H1 (cell line): ENCODE measurements at regions of chr12 and their contacts with region 1.

Region 1: DNA sequence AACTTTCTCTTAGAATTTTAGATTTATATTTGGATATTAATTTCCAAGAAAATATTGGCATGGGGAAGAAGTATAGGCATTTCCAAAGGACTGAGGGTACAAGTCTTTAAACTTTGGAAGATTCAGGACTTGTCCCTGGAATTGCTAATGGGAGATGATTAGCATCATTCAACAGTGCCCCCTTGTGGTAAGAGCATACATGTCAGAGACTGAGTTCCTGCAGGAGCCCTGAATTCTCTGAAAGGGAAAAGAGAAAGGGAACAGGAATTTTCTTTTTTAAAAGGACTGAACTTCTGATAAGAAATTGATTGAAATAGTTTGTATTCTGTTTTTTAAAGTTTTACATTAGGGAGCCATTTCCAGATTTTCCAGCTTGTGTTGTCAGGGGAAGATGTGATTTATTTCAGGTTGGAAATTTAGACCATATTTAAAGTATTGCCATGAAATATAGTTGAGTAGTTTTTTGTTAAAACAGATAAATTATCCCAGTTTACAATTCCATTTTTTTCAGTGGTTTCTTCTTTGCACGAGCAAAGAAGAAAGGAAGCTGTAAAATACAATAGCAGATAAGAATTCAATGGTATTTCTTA is 44.0 kb upstream of the REP15 start:
- DNase-seq: no peak
- H3K4me3 ChIP-seq: no peak overlapping the region
- H3K27ac ChIP-seq: no peak overlapping the region
- H3K4me1 ChIP-seq: no peaks in the 10 kb centered on the region
- H3K27me3 ChIP-seq: no peaks in the 10 kb centered on the region
- CTCF ChIP-seq: peak in 2 of 3 experiments; percentile 77; a peak in 3 of 4 replicates
- EP300 ChIP-seq: no peak
- POLR2A ChIP-seq: no peak
- RAD21 ChIP-seq: peak; percentile 80 to 84

Region 2: GRCh38 chr12:27610374-27610773 is 41.9 kb before region 1 on chr12:
- CTCF ChIA-PET with region 1: no interaction called
- POLR2A ChIA-PET with region 1: no interaction called
- DNase-seq: no peak
- H3K4me3 ChIP-seq: no peak overlapping the region
- H3K27ac ChIP-seq: no peak overlapping the region
- H3K4me1 ChIP-seq: 0 out of 7 replicates have a peak, but pooled peaks cover 0 to 3% (median 0%) of the 10 kb centered on the region in 4 experiments
- H3K27me3 ChIP-seq: no peaks in the 10 kb centered on the region
- CTCF ChIP-seq: no peak
- EP300 ChIP-seq: no peak
- POLR2A ChIP-seq: no peak
- RAD21 ChIP-seq: no peak

Region 3: DNA sequence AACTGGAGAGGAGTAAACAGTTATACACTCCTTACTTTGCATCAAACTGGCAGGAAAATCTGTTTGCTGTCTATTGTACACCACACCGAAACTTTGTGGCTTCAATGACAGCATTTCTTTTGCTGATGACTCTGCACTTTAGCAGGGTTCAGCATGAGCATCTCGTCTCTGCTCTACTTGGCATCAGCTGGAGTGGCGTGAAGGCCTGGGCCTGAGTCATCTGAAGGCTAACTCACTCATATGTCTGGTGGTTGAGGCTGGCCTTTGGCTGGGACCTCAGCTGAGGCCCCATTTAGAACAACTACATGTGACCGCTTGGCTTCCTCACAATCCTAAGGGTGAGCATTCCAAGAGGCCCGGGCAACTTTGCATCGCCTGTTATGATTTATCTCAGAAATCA is 15.3 kb after region 1 on chr12:
- CTCF ChIA-PET with region 1: interaction called, 10 read pairs
- POLR2A ChIA-PET with region 1: no interaction called
- DNase-seq: no peak
- H3K4me3 ChIP-seq: no peak overlapping the region
- H3K27ac ChIP-seq: no peak overlapping the region
- H3K4me1 ChIP-seq: no peaks in the 10 kb centered on the region
- H3K27me3 ChIP-seq: no peaks in the 10 kb centered on the region
- CTCF ChIP-seq: no peak
- EP300 ChIP-seq: no peak
- POLR2A ChIP-seq: no peak
- RAD21 ChIP-seq: no peak